GM12878 (cell line): ENCODE measurements at regions of chr9 and their contacts with region 1.

Region 1: DNA sequence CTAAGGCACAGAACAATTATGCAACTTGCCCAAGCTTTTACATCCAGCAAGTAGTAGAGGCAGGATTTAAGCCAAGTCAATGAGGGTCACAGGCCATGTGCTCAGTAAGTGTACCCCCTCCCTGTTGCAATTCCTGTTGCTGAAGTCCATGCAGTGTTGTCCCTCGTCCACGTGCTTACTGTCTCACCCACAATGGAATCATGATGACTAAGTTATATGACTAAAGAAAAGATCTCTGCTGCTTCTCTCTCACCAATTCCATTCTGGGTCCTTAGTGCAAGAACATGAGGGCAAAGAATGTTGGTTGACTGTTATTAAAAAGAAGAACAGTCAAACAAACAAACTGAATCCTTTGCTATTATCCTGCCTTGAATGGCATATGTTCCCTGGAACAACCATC is 233.6 kb upstream of the SLC24A2 start:
- DNase-seq: no peak
- ATAC-seq: no peak
- H3K4me3 ChIP-seq: no peak overlapping the region
- H3K27ac ChIP-seq: no peak overlapping the region
- H3K4me1 ChIP-seq: no peaks in the 10 kb centered on the region
- H3K27me3 ChIP-seq: no peaks in the 10 kb centered on the region
- CTCF ChIP-seq: no peak
- EP300 ChIP-seq: no peak
- POLR2A ChIP-seq: no peak
- RAD21 ChIP-seq: no peak

Region 2: DNA sequence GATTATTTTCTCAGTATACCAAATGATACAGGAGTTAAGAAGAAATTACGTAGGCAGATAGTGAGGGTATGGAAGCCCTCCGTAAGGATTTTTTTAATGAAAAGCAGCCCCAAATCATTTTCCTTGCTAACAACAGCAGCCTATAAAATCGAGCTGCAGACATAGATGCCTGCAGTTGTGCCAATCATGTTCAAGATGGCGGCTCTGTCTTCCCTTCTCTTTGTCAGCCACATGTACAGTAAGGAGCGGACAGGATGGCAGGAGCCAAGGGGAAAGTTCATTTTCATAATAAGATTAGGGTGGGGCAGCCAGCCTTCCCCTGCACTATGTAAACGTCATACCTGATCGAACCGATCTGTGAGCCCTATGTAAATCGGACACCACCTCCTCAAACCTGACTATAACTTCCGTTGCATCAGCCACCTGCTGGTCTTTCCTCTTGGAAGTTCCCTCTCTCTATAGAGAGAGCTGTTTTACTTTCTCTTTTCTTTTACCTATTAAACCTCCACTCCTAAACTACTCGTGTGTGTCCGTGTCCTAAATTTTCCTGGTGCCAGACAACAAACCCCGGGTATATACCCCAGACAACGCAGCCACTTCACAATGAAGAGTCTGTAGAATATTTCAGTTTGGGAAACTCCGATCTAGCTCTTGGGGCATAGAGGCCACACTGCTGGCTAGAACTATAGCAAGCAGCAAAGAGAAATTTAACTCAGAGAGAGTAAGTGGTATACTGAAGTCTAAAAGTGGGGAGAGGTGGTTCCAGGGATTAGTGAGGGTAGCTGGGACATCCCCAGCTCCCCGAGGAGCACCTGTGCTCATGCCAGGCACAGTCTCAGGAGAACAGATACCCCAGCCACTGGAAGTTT is 212.8 kb before region 1 on chr9:
- CTCF ChIA-PET with region 1: no interaction called
- POLR2A ChIA-PET with region 1: no interaction called
- RAD21 ChIA-PET with region 1: no interaction called
- SMC1A ChIA-PET with region 1: no interaction called
- in situ Hi-C with region 1: no loop called
- intact Hi-C with region 1: no loop called
- DNase-seq: no peak
- ATAC-seq: peak; percentile 31; the same call in 2 of the 3 replicates
- H3K4me3 ChIP-seq: no peak overlapping the region
- H3K27ac ChIP-seq: no peak overlapping the region
- H3K4me1 ChIP-seq: no peaks in the 10 kb centered on the region
- H3K27me3 ChIP-seq: no peaks in the 10 kb centered on the region
- CTCF ChIP-seq: no peak
- EP300 ChIP-seq: no peak
- POLR2A ChIP-seq: no peak
- RAD21 ChIP-seq: no peak

Region 3: GRCh38 chr9:19946441-19947109 is 75.8 kb before region 1 on chr9:
- CTCF ChIA-PET with region 1: no interaction called
- POLR2A ChIA-PET with region 1: no interaction called
- RAD21 ChIA-PET with region 1: no interaction called
- SMC1A ChIA-PET with region 1: no interaction called
- in situ Hi-C with region 1: no loop called
- intact Hi-C with region 1: no loop called
- DNase-seq: no peak
- ATAC-seq: peak; percentile 95
- H3K4me3 ChIP-seq: no peak overlapping the region
- H3K27ac ChIP-seq: no peak overlapping the region
- H3K4me1 ChIP-seq: no peaks in the 10 kb centered on the region
- H3K27me3 ChIP-seq: no peaks in the 10 kb centered on the region
- CTCF ChIP-seq: peak; percentile 42 to 51 (median 47); a peak in 5 of 6 replicates
- EP300 ChIP-seq: no peak
- POLR2A ChIP-seq: no peak
- RAD21 ChIP-seq: peak; percentile 65

Region 4: DNA sequence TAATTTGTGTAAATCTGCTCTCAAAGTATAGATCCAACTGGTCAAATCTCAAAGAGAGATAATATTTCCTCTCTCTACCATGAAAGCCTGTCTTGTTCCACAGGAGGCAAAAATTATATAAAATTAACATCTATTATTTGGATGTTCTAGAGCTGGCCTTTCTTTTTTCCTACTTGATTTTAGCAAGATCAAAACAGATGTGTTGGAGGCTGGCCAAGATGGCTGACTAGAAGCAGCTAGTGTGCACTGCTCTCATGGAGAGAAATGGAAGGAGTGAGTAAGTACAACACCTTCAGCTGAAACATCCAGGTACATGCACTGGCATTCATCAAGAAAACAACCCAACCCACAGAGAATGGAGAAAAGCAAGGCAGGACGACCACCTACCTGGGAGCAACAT is 65.1 kb after region 1 on chr9:
- CTCF ChIA-PET with region 1: no interaction called
- POLR2A ChIA-PET with region 1: no interaction called
- RAD21 ChIA-PET with region 1: no interaction called
- SMC1A ChIA-PET with region 1: no interaction called
- in situ Hi-C with region 1: loop called (anchors 10 kb)
- intact Hi-C with region 1: no loop called
- DNase-seq: no peak
- ATAC-seq: no peak
- H3K4me3 ChIP-seq: no peak overlapping the region
- H3K27ac ChIP-seq: no peak overlapping the region
- H3K4me1 ChIP-seq: no peaks in the 10 kb centered on the region
- H3K27me3 ChIP-seq: no peaks in the 10 kb centered on the region
- CTCF ChIP-seq: no peak
- EP300 ChIP-seq: no peak
- POLR2A ChIP-seq: no peak
- RAD21 ChIP-seq: no peak

Region 5: GRCh38 chr9:20331095-20331685 is 308.8 kb after region 1 on chr9:
- CTCF ChIA-PET with region 1: no interaction called
- POLR2A ChIA-PET with region 1: no interaction called
- RAD21 ChIA-PET with region 1: no interaction called
- SMC1A ChIA-PET with region 1: no interaction called
- in situ Hi-C with region 1: no loop called
- intact Hi-C with region 1: no loop called
- DNase-seq: no peak
- ATAC-seq: peak; percentile 73
- H3K4me3 ChIP-seq: no peak overlapping the region
- H3K27ac ChIP-seq: no peak overlapping the region
- H3K4me1 ChIP-seq: peaks cover 5% of the 10 kb centered on the region; the same call in 1 of the 2 replicates
- H3K27me3 ChIP-seq: no peaks in the 10 kb centered on the region; a peak in 1 of 4 replicates
- CTCF ChIP-seq: no peak
- EP300 ChIP-seq: no peak
- POLR2A ChIP-seq: no peak
- RAD21 ChIP-seq: no peak